ENCODE measurements at regions of chr2 and their contacts with region 1.

Region 1: GRCh38 chr2:217785544-217786045 is 217.2 kb downstream of the TNS1 start:
- DNase-seq: peak; percentile 76
- H3K4me3 Mint-ChIP-seq: no peak overlapping the region
- H3K27ac Mint-ChIP-seq: peak overlapping the region; percentile 4
- H3K4me1 Mint-ChIP-seq: peaks cover 24% of the 10 kb centered on the region
- H3K27me3 Mint-ChIP-seq: peaks cover 8% of the 10 kb centered on the region

Region 2: GRCh38 chr2:217797661-217798069 is 12.1 kb after region 1 on chr2:
- CTCF ChIA-PET with region 1: interaction called, 10 read pairs
- POLR2A ChIA-PET with region 1: no interaction called
- DNase-seq: no peak
- H3K4me3 Mint-ChIP-seq: no peak overlapping the region
- H3K27ac Mint-ChIP-seq: no peak overlapping the region
- H3K4me1 Mint-ChIP-seq: peaks cover 7% of the 10 kb centered on the region
- H3K27me3 Mint-ChIP-seq: no peaks in the 10 kb centered on the region

Region 3: DNA sequence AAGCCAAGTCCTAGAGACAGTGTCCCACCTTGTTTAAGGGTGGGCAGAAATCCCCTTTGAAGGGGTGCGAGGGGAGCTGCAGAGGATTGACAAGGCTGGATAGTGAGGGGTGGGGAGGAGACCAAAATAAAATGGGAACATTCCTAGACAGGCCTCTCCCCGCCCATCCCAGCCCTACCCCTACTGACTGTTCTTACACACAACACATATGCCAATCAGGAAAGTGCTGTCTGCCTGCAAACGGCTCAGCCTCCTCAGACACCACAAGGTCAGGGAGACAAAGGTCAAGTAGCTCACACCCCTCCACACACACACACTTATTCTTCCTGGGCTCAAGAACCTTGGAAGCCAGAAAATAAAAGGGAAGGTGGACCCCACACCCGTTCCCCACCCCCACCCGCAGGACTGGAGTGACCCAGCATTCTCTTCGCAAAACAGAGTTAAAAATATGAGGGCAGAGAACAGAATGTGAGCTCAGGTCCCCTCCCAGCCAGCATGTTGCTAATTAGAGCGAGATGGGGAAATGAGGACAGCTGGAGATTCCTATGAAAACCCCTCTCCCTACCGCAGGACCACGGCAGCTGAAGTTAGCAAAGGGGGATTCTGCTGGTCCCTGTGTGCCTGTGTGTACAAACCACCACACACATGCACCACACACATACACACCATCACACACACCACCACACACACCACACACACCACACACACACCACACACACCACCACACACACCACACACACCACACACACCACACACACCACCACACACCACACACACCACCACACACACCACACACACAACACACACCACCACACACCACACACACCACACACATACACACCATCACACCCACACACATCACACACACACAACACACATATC is 19.4 kb after region 1 on chr2:
- CTCF ChIA-PET with region 1: interaction called, 13 read pairs
- POLR2A ChIA-PET with region 1: no interaction called
- DNase-seq: no peak
- H3K4me3 Mint-ChIP-seq: no peak overlapping the region
- H3K27ac Mint-ChIP-seq: peak overlapping the region; percentile 64
- H3K4me1 Mint-ChIP-seq: no peaks in the 10 kb centered on the region
- H3K27me3 Mint-ChIP-seq: no peaks in the 10 kb centered on the region

Region 4: GRCh38 chr2:217886720-217887309 is 101.2 kb after region 1 on chr2:
- CTCF ChIA-PET with region 1: interaction called, 17 read pairs
- POLR2A ChIA-PET with region 1: no interaction called
- DNase-seq: peak; percentile 76
- H3K4me3 Mint-ChIP-seq: no peak overlapping the region
- H3K27ac Mint-ChIP-seq: no peak overlapping the region
- H3K4me1 Mint-ChIP-seq: no peaks in the 10 kb centered on the region
- H3K27me3 Mint-ChIP-seq: peaks cover 1% of the 10 kb centered on the region

Region 5: GRCh38 chr2:217993817-217994463 is 208.3 kb after region 1 on chr2:
- CTCF ChIA-PET with region 1: interaction called, 15 read pairs
- POLR2A ChIA-PET with region 1: interaction called, 3 read pairs
- DNase-seq: peak; percentile 58
- H3K4me3 Mint-ChIP-seq: no peak overlapping the region
- H3K27ac Mint-ChIP-seq: no peak overlapping the region
- H3K4me1 Mint-ChIP-seq: peaks cover 2% of the 10 kb centered on the region
- H3K27me3 Mint-ChIP-seq: peaks cover 7% of the 10 kb centered on the region

Measured in activated CD4-positive, alpha-beta T cell treated with anti-CD3 and anti-CD28 coated beads, Interleukin-2, amount 10 ng/mL, durations not matched to agents 7 days and 5 days (primary cell).